ENCODE measurements at regions of chr3 and their contacts with region 1.

Region 1: GRCh38 chr3:45656575-45657363 is 32.4 kb upstream of the SACM1L start:
- DNase-seq: peak; percentile 75 to 92 (median 83)
- ATAC-seq: peak; percentile 93
- H3K4me3 ChIP-seq: no peak overlapping the region
- H3K4me3 Mint-ChIP-seq: no peak overlapping the region
- H3K27ac ChIP-seq: no peak overlapping the region
- H3K27ac Mint-ChIP-seq: peak overlapping the region; percentile 47
- H3K4me1 ChIP-seq: peaks cover 9% of the 10 kb centered on the region
- H3K4me1 Mint-ChIP-seq: peaks cover 17% of the 10 kb centered on the region
- H3K27me3 ChIP-seq: no peaks in the 10 kb centered on the region
- H3K27me3 Mint-ChIP-seq: no peaks in the 10 kb centered on the region
- CTCF ChIP-seq: peak; percentile 90

Region 2: DNA sequence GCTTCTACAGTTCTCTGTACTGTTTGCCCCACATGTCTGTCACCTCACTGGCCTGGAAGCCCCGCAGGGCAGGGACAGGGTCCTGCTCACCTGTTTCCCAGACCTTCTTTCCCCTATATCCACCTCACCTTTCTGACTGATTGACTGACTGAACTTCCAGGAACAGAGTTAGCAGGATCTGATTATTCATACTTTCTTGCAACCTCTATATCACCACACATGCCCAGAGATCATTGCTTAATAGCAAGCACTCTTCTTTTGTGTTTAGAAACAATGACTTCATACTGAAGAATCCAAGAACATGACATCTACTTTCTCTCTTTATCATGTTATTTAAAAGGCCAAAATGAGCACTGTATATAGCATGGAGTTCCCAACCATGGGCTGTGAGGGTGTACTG is 648.7 kb before region 1 on chr3:
- CTCF ChIA-PET with region 1: no interaction called
- POLR2A ChIA-PET with region 1: no interaction called
- intact Hi-C with region 1: no loop called
- DNase-seq: no peak
- ATAC-seq: no peak
- H3K4me3 ChIP-seq: no peak overlapping the region
- H3K4me3 Mint-ChIP-seq: no peak overlapping the region
- H3K27ac ChIP-seq: no peak overlapping the region
- H3K27ac Mint-ChIP-seq: peak overlapping the region; percentile 4
- H3K4me1 ChIP-seq: peaks cover 63% of the 10 kb centered on the region
- H3K4me1 Mint-ChIP-seq: peaks cover 46% of the 10 kb centered on the region
- H3K27me3 ChIP-seq: peaks cover 0 to 2% of the 10 kb centered on the region in 2 experiments
- H3K27me3 Mint-ChIP-seq: no peaks in the 10 kb centered on the region
- CTCF ChIP-seq: no peak

Region 3: DNA sequence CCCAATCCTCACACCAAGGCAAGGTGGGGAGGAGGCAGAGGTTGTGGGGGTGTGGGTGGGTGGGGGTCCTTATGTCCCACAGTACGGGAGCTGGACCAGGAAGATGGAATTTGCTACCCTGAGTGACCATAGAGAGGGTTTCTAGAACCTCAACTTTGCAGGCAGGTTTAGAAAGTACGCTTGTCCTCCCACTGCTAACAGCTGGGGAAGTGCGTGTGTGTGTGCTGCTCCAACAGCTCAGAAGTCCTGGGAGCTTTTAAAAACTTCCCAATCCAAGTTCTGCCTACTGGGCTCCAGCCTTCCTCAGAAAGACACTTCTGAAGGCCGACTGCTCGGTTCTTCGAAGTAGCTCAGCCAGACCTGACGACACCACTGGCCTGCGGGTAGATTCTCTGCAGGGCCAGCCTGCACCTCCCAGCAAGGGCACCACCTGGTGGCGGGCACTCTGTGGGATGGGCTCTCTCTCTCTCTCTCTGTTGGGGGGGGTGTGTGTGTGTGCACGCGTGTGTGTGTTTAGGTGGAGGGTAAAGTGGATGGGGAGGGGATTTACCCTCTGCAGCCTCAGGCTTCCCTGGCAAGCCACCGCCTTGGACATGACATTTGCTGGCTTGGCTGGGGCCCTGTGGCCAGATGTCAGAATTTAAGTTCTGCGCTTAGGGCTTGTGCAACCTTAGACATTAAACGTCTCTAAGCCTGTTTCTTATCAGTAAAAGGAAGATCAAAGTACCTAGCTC is 446.3 kb before region 1 on chr3:
- CTCF ChIA-PET with region 1: no interaction called
- POLR2A ChIA-PET with region 1: no interaction called
- intact Hi-C with region 1: loop called in 1 of 2 experiments (anchors 2 kb)
- DNase-seq: peak; percentile 76 to 90 (median 81)
- ATAC-seq: peak; percentile 98
- H3K4me3 ChIP-seq: no peak overlapping the region
- H3K4me3 Mint-ChIP-seq: no peak overlapping the region
- H3K27ac ChIP-seq: no peak overlapping the region
- H3K27ac Mint-ChIP-seq: no peak overlapping the region
- H3K4me1 ChIP-seq: peaks cover 17% of the 10 kb centered on the region
- H3K4me1 Mint-ChIP-seq: peaks cover 25% of the 10 kb centered on the region
- H3K27me3 ChIP-seq: peaks cover 4 to 10% of the 10 kb centered on the region in 2 experiments
- H3K27me3 Mint-ChIP-seq: peaks cover 5% of the 10 kb centered on the region
- CTCF ChIP-seq: peak; percentile 85

Region 4: GRCh38 chr3:45224824-45225464 is 431.8 kb before region 1 on chr3:
- CTCF ChIA-PET with region 1: no interaction called
- POLR2A ChIA-PET with region 1: no interaction called
- intact Hi-C with region 1: loop called in 1 of 2 experiments (anchors 10 kb)
- DNase-seq: peak in 5 of 14 experiments; percentile 3 to 50 (median 36)
- ATAC-seq: no peak
- H3K4me3 ChIP-seq: peak overlapping the region; percentile 16
- H3K4me3 Mint-ChIP-seq: peak overlapping the region; percentile 87
- H3K27ac ChIP-seq: no peak overlapping the region
- H3K27ac Mint-ChIP-seq: no peak overlapping the region
- H3K4me1 ChIP-seq: peaks cover 14% of the 10 kb centered on the region
- H3K4me1 Mint-ChIP-seq: peaks cover 13% of the 10 kb centered on the region
- H3K27me3 ChIP-seq: peaks cover 69 to 71% of the 10 kb centered on the region in 2 experiments
- H3K27me3 Mint-ChIP-seq: peaks cover 83% of the 10 kb centered on the region
- CTCF ChIP-seq: no peak

Region 5: DNA sequence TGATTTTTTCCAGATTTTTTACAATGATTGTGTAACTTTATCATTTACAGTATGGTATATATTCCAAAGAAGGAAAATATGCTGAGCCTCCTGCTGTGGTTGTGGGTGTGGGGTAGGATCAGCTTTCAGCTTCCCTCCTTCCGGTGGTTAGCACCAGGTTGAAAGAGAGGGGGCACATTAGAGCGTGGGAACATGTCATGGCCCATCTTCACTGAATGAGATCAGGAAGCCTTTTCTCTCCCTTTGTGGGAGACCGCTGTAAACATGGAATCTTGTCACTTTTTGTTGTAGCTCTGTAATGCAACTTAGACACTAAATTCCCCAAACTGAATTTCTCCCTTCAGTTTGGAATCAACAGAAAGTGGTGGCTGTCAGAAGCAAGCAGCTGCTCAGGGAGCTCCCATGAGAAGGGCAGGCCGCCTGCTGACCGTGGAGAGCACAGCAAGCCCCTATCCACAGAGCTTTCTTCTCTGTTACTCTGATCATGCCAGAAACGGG is 148.9 kb before region 1 on chr3:
- CTCF ChIA-PET with region 1: interaction called, 28 read pairs
- POLR2A ChIA-PET with region 1: interaction called, 3 read pairs
- intact Hi-C with region 1: loop called (anchors 1 kb)
- DNase-seq: peak in 1 of 14 experiments; percentile 22
- ATAC-seq: peak; percentile 56
- H3K4me3 ChIP-seq: no peak overlapping the region
- H3K4me3 Mint-ChIP-seq: no peak overlapping the region
- H3K27ac ChIP-seq: no peak overlapping the region
- H3K27ac Mint-ChIP-seq: no peak overlapping the region
- H3K4me1 ChIP-seq: peaks cover 10% of the 10 kb centered on the region
- H3K4me1 Mint-ChIP-seq: peaks cover 15% of the 10 kb centered on the region
- H3K27me3 ChIP-seq: no peaks in the 10 kb centered on the region
- H3K27me3 Mint-ChIP-seq: no peaks in the 10 kb centered on the region
- CTCF ChIP-seq: no peak

Region 6: DNA sequence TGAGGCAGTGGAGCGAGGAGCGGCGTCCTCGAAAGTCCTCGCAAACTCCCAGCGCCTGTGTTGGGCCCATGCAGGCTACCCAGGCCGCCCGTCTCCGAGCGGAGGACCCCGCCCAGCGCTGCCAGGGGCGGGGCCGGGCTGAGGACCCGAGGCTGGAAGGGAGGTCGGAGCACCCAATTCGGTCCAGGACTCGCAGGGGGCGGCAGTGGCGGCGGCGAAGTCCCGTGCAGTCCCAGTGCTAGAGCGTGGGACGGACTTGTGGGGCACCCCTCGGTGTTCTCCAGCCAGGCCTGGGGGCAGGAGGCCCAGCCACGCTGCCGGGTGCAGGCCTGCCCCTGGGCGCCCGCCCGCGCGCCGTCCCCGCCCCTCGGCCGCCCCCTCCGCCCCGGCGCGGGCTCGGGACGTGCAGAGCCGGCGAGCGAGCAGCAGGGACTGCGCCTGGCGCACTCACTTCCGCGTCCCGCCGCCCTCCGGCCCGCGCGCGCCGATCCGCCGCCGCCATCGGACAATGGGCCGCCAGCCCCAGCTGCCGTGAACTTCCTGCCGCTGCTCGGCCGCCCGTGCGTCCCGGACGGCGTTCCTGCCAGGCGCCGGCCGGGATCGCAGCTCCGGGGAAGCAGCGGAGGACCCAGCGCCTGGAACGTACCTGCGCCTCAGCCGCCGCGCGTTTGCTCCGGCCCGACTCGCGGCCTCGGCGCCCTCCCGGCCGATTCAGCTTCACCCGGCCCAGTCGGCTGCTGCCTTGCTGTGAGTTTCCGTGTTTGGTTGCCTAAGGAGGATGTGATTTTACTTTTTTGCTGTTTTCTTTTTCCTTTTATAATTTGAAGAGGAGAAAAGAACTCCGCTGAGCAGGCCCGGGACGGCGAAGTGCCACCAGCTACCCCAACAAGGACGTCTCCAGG is 62.8 kb before region 1 on chr3:
- CTCF ChIA-PET with region 1: interaction called, 8 read pairs
- POLR2A ChIA-PET with region 1: interaction called, 5 read pairs
- intact Hi-C with region 1: loop called (anchors 1 kb)
- DNase-seq: peak; percentile 35 to 84 (median 63)
- ATAC-seq: peak; percentile 77
- H3K4me3 ChIP-seq: peak overlapping the region; percentile 81
- H3K4me3 Mint-ChIP-seq: peak overlapping the region; percentile 94
- H3K27ac ChIP-seq: peak overlapping the region; percentile 32 to 45
- H3K27ac Mint-ChIP-seq: peak overlapping the region; percentile 89
- H3K4me1 ChIP-seq: peaks cover 66% of the 10 kb centered on the region
- H3K4me1 Mint-ChIP-seq: peaks cover 57% of the 10 kb centered on the region
- H3K27me3 ChIP-seq: no peaks in the 10 kb centered on the region
- H3K27me3 Mint-ChIP-seq: no peaks in the 10 kb centered on the region
- CTCF ChIP-seq: no peak

Region 7: DNA sequence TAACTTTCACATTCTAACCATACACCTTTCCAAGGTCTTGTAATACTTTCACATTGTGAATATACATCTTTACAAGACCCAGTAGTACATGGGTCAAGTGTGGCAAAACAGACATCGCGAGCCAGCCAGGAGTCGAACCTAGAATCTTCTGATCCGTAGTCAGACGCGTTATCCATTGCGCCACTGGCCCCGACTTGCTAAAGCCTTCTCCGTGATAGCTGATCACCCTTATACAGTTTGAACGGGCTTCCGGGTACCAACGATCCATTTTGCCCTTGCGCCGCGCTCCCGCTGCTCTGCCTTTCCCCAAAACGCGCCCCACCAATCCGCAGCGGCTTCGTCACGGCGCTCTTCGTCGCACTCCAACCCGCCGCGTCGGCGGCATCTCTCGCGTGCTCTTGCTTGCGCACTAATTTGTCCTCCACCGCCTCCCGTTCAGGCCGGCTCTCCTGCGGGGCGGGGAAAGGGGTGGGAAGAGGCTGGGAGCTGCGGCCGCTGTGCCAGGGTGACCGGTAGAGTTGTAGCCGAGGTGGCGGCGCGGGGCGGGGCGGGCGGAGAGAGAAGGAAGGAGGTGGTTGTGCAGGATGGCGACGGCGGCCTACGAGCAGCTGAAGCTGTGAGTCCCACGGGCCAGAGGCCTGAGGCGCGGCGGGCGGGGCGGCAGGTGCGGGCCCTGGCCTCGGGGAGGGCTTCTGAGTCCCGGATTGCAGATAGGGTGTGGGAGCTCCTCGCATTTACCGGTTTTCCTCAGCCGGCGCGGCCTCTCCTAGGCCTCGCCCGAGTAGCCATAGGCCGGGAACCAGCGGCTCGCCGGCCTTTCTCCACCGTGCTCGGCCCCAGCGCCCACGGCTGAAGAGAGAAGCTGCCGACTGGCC is 32.4 kb after region 1 on chr3 and contains the start of gene SACM1L:
- CTCF ChIA-PET with region 1: interaction called, 27 read pairs
- POLR2A ChIA-PET with region 1: interaction called, 3 read pairs
- intact Hi-C with region 1: no loop called
- DNase-seq: peak; percentile 88 to 99 (median 93)
- ATAC-seq: peak; percentile 85
- H3K4me3 ChIP-seq: peak within 1 kb of the TSS; percentile 81
- H3K4me3 Mint-ChIP-seq: peak within 1 kb of the TSS; percentile 94
- H3K27ac ChIP-seq: peak within 1 kb of the TSS; percentile 90 to 91
- H3K27ac Mint-ChIP-seq: peak within 1 kb of the TSS; percentile 99
- H3K4me1 ChIP-seq: peaks cover 39% of the 10 kb centered on the region
- H3K4me1 Mint-ChIP-seq: peaks cover 69% of the 10 kb centered on the region
- H3K27me3 ChIP-seq: no peaks in the 10 kb centered on the region
- H3K27me3 Mint-ChIP-seq: peaks cover 7% of the 10 kb centered on the region
- CTCF ChIP-seq: no peak
- total RNA-seq, gene SACM1L: 41.9 to 44.3 TPM

Measured in CD4-positive, alpha-beta T cell (primary cell).